Activated B cell treated with CpG ODN at 0.5 μM for 24 hours (primary cell): ENCODE measurements at regions of chr1 and their contacts with region 1.

Region 1: GRCh38 chr1:110780600-110781484 is 92.1 kb upstream of the CD53 start:
- DNase-seq: peak; percentile 48
- ATAC-seq: peak; percentile 85
- H3K4me3 Mint-ChIP-seq: peak overlapping the region; percentile 47
- H3K27ac Mint-ChIP-seq: no peak overlapping the region
- H3K4me1 Mint-ChIP-seq: peaks cover 43% of the 10 kb centered on the region
- H3K27me3 Mint-ChIP-seq: no peaks in the 10 kb centered on the region
- CTCF ChIP-seq: no peak

Region 2: DNA sequence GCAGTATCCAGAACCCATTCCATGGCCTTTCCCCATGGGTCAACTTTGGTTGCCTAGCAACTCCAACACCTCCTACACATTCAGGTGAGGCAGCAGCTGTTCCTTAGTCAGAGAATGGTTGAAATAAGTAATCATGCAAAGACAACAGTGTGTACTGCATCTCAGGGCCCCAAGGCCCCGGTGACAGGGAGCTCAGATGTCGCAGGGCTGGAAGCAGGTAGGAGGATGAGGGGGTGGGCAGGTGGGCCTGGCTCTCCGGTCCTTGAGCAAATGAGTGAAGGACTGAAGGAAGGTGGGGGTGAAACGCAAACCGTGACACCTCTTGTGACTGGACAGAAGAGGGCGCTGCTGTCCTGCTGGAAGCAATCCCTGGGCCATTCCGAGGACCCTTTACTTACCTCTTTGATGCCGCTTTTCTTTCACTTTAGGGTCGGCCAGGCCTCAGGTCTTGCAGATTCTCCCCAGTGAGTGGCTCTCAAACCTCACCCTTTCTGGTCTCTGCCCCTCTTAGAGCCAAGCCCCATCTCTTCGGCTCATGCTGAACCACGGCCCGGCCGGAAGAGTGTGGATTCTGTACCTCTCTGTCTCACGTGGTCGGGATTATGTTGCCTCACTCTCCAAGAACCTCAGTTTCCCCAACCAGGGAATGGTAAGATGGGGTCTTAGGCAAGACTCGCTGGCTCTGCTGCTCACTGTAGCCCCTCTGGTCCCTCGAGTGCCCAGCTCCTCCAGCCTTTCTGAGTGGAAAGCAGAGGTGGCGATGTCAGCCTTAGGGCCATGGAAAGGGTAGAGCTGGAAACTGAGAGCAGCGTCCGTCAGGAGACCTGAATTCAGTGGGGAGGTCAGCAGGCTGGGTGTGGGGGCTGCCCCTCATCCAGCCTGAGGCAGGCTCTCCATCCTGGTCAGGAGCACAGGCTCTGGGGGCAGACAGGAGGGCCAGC is 256.3 kb before region 1 on chr1:
- CTCF ChIA-PET with region 1: interaction called, 3 read pairs
- POLR2A ChIA-PET with region 1: no interaction called
- intact Hi-C with region 1: loop called (anchors 1 kb)
- DNase-seq: no peak
- ATAC-seq: no peak
- H3K4me3 Mint-ChIP-seq: no peak overlapping the region
- H3K27ac Mint-ChIP-seq: no peak overlapping the region
- H3K4me1 Mint-ChIP-seq: peaks cover 5% of the 10 kb centered on the region
- H3K27me3 Mint-ChIP-seq: peaks cover 34% of the 10 kb centered on the region
- CTCF ChIP-seq: no peak

Region 3: DNA sequence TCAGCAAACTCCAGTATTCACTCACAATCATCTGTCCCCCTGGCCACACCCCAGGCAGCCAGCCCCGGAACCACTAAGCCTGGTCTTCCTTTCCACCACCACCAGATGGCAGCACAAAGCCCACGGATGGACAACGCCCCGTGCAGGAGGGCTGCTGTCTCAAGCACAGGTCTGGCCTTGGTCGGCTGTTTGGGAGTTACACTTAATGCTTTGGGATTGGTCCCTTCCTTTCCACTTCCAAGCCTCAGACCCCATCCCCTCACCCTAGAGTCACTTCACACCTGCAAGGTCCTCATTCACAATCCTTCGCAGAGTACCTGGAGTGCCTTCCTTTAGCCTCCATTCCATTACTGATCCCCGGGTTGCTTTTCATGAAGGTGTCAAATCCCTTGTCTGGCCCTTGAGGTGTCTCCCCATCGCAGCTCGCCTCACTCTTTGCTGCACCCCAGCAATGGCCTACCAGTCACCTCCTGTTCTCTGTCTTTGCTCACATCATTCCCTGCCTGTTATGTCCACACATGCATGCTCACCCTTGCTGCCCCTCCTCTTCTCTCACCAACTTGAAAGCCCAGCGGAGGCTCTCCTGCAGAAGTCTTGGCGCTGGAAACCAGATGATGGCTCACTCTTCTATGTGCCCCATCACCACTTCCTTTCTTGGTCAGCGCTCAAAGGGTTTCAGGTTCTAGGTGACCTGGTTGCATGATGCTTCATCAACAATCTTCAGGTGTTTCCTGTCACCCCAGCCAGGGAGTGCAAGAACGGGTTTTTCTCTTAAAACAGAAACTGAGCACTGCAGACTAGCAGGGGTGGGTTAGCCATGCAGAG is 149.8 kb before region 1 on chr1:
- CTCF ChIA-PET with region 1: interaction called, 42 read pairs
- POLR2A ChIA-PET with region 1: interaction called, 3 read pairs
- intact Hi-C with region 1: loop called (anchors 1 kb)
- DNase-seq: peak; percentile 72
- ATAC-seq: peak; percentile 73
- H3K4me3 Mint-ChIP-seq: no peak overlapping the region
- H3K27ac Mint-ChIP-seq: no peak overlapping the region
- H3K4me1 Mint-ChIP-seq: peaks cover 46% of the 10 kb centered on the region
- H3K27me3 Mint-ChIP-seq: no peaks in the 10 kb centered on the region
- CTCF ChIP-seq: peak; percentile 82

Region 4: DNA sequence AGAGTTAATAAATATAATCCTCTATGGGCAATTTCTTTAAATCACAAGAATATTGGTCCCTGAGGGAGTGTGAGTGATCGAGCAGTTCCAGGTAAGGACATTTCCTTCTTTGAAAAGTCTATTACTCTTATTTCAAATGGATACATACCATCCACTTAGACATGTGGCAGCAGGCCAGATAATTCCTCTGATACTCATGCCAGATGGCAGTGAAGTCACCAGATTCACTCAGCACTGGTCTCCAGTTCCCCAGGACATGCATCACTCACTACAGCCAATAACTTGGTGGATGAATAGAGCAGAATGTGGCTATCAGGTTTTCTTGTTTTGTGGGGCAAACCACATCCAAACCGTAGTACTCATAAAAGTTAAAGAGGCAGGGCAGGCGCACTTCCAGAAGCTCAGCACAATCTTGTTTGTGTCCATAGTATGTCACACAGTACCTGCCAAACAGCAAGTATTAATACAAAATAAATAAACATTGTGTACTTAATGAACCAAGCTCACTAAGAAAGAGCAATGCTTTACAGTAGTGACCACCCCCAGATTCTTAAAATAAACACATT is 17.9 kb after region 1 on chr1:
- CTCF ChIA-PET with region 1: interaction called, 4 read pairs
- POLR2A ChIA-PET with region 1: interaction called, 12 read pairs
- intact Hi-C with region 1: no loop called
- DNase-seq: no peak
- ATAC-seq: no peak
- H3K4me3 Mint-ChIP-seq: no peak overlapping the region
- H3K27ac Mint-ChIP-seq: no peak overlapping the region
- H3K4me1 Mint-ChIP-seq: peaks cover 3% of the 10 kb centered on the region
- H3K27me3 Mint-ChIP-seq: no peaks in the 10 kb centered on the region
- CTCF ChIP-seq: no peak

Region 5: GRCh38 chr1:110986407-110986891 is 205.6 kb after region 1 on chr1:
- CTCF ChIA-PET with region 1: interaction called, 28 read pairs
- POLR2A ChIA-PET with region 1: no interaction called
- intact Hi-C with region 1: no loop called
- DNase-seq: no peak
- ATAC-seq: no peak
- H3K4me3 Mint-ChIP-seq: no peak overlapping the region
- H3K27ac Mint-ChIP-seq: no peak overlapping the region
- H3K4me1 Mint-ChIP-seq: peaks cover 6% of the 10 kb centered on the region
- H3K27me3 Mint-ChIP-seq: peaks cover 11% of the 10 kb centered on the region
- CTCF ChIP-seq: no peak